ENCODE measurements at regions of chr19 and their contacts with region 1.

Region 1: GRCh38 chr19:49148784-49149651 is 6.2 kb downstream of the HRC start:
- DNase-seq: peak; percentile 80 to 84
- ATAC-seq: peak; percentile 75 to 82 (median 79)
- H3K4me3 ChIP-seq: peak overlapping the region; percentile 56
- H3K4me3 Mint-ChIP-seq: peak overlapping the region; percentile 96
- H3K27ac ChIP-seq: no peak overlapping the region
- H3K27ac Mint-ChIP-seq: no peak overlapping the region
- H3K4me1 ChIP-seq: peaks cover 45% of the 10 kb centered on the region
- H3K4me1 Mint-ChIP-seq: peaks cover 27 to 52% of the 10 kb centered on the region in 2 donors
- H3K27me3 ChIP-seq: peaks cover 25% of the 10 kb centered on the region
- H3K27me3 Mint-ChIP-seq: peaks cover 17 to 48% of the 10 kb centered on the region in 2 donors
- CTCF ChIP-seq: no peak

Region 2: DNA sequence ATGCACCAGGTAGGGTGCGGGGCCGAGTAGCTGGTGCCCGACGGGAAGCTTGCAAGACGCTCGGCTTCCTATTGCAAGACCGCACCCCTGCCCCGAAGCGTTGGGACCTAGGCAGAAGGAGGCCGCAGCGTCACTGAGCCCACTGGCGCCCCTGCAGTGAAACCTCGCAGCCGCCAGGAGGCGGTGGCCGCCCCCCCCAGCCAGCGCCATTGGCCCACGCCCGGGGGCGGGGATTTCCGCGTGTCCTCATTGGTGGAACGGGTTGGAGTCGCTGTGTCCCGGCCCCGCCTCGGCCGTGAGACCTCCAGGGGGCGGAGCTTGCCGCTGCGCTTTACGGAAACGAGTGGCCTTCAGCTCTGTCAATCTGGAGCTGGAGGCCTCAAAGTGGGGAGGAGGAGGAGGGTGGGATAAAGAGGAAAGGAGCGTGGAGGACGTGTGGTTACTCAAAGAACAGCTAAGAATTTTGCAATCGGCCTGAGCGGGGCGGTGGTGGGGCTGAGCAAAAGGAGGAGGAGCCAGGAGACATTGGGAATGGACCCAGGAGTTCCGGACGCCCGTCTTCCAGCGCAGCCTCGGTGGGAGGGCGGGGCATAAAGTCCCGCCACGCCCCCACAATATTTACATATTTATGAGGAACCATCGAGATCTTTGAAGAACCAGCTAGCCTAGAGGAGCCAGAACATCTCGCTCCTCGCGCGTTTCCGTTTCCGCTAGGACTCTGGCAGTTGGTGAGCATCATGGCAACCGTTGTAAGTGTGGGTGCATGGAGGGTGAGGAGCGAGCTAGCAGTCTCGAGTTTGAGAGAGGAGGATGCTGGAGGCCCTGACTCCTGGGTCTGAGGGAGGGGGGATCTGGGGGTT is 155.6 kb before region 1 on chr19 and contains the starts of genes GYS1 and RUVBL2:
- intact Hi-C with region 1: loop called (anchors 10 kb)
- DNase-seq: peak; percentile 98 to 100
- ATAC-seq: peak; percentile 90 to 98 (median 92)
- H3K4me3 ChIP-seq: peak within 1 kb of the TSS; percentile 79
- H3K4me3 Mint-ChIP-seq: peak within 1 kb of the TSS; percentile 97
- H3K27ac ChIP-seq: peak within 1 kb of the TSS; percentile 86
- H3K27ac Mint-ChIP-seq: peak within 1 kb of the TSS; percentile 94 to 97
- H3K4me1 ChIP-seq: peaks cover 31% of the 10 kb centered on the region
- H3K4me1 Mint-ChIP-seq: peaks cover 28 to 51% of the 10 kb centered on the region in 2 donors
- H3K27me3 ChIP-seq: no peaks in the 10 kb centered on the region
- H3K27me3 Mint-ChIP-seq: no peaks in the 10 kb centered on the region
- CTCF ChIP-seq: peak; percentile 97
- total RNA-seq, gene GYS1: 31.6 to 34.5 (median 34.4) TPM
- total RNA-seq, gene RUVBL2: 23.6 to 28.3 (median 26.5) TPM